ENCODE measurements at regions of chr13 and their contacts with region 1.

Region 1: GRCh38 chr13:28792992-28793391 is 27.1 kb upstream of the MTUS2 start:
- DNase-seq: no peak
- ATAC-seq: no peak

Region 2: DNA sequence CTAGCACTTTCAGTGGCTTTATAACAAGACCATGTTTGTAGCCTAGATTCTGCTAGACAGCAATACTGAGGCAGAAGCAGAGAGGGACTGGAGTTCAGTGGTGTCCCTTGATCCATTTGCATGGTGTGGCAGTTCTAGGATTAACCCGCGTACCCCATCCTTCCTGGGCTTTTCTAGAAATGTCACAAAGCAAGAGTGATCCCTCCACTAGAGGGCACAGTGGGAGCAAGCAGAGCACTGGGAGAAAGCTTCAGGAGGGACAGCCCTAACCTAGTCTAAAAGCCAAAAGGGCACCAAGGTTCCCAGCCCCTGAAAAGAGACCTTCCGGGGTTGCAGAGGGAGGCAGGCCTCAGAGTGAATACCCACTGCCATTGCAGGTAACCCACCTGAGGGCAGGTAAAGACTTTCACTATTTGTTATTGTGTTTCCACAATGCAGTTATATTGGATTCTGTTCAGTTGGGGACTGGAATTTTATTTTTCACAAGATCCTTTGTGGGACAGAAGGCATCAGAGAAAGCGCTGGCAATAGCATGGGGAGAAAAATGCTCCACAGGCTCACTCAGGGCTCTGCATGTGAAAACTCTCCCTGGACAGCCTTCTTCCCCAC is 468.7 kb before region 1 on chr13:
- intact Hi-C with region 1: loop called (anchors 10 kb)
- DNase-seq: no peak
- ATAC-seq: peak; percentile 87

Region 3: DNA sequence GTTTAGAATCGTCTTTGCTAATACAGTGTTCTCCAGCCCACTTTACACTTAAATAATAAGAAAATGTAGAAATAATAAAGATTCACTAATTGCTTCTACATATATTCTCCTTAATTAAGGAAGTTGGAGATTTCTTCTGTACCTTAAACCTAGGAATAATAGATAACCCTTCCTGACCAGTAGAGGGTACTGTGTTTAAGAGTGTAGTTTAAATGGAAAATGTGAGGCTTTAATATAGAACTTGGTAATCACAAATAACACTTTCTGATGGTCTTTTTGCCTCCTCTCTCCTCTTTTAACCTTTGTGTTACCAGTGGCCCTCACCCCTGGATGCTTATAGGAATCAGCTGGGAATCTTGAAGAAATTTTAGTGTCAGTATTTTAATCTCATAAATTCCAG is 113.4 kb before region 1 on chr13:
- intact Hi-C with region 1: loop called (anchors 10 kb)
- DNase-seq: no peak
- ATAC-seq: no peak

Measured in Right ventricle myocardium superior (tissue), 1 donor.